ENCODE measurements at regions of chr20 and their contacts with region 1.

Region 1: DNA sequence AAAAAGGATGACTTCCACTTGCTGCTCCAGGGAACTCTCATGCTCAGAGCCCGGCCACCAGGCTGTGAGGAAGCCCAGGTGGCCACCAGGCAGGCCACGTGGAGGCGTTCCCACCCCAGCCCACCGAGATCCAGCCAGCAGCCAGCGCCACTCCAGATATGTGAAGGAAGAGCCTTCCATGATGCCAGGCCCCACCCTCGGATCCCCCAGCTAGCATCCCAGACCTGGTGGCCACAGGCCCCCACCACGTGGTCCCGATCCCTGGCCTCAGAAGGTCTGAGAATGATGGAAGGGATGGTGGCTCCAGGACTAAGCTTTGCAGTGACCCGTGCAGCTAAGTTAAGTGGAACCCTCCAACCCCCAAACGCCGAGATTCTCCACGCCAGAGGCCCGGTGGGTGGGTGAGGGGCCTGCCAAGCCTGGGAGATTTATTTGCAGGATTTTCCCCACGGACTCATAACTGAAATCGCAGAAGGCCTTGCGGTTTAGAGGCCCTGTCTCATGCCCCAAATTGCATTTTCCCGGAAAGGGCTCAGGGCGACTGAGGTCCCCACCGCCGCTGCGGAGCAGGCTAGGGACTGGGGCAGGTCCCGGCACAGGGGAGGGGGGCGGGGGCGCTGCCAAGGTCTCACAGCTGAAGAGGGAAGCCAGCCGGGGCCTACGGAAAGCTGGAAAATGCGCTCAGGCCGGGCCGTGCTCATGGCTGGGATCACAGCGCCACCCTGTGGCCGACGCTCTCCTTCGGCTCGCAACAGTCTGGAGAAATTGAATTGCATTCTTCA is 31.1 kb upstream of the CST7 start:
- DNase-seq: peak; percentile 19
- H3K4me3 Mint-ChIP-seq: no peak overlapping the region
- H3K27ac Mint-ChIP-seq: no peak overlapping the region
- H3K4me1 Mint-ChIP-seq: no peaks in the 10 kb centered on the region
- H3K27me3 Mint-ChIP-seq: no peaks in the 10 kb centered on the region
- CTCF ChIP-seq: peak; percentile 23

Region 2: GRCh38 chr20:24100385-24101011 is 817.5 kb before region 1 on chr20:
- CTCF ChIA-PET with region 1: no interaction called
- intact Hi-C with region 1: loop called (anchors 5 kb)
- DNase-seq: peak; percentile 5
- H3K4me3 Mint-ChIP-seq: no peak overlapping the region
- H3K27ac Mint-ChIP-seq: no peak overlapping the region
- H3K4me1 Mint-ChIP-seq: no peaks in the 10 kb centered on the region
- H3K27me3 Mint-ChIP-seq: peaks cover 13% of the 10 kb centered on the region
- CTCF ChIP-seq: no peak

Measured in Calu3 (cell line).